Activated B cell treated with CpG ODN at 0.5 μM for 24 hours (primary cell): ENCODE measurements at regions of chr5 and their contacts with region 1.

Region 1: GRCh38 chr5:132293066-132293991 is 865 bp upstream of the SLC22A4 start:
- DNase-seq: peak; percentile 56
- ATAC-seq: peak; percentile 43
- H3K4me3 Mint-ChIP-seq: peak overlapping the region; percentile 87
- H3K27ac Mint-ChIP-seq: peak overlapping the region; percentile 76
- H3K4me1 Mint-ChIP-seq: peaks cover 15% of the 10 kb centered on the region
- H3K27me3 Mint-ChIP-seq: peaks cover 34% of the 10 kb centered on the region
- CTCF ChIP-seq: no peak

Region 2: GRCh38 chr5:132180134-132180745 is 113.1 kb before region 1 on chr5:
- CTCF ChIA-PET with region 1: no interaction called
- POLR2A ChIA-PET with region 1: no interaction called
- intact Hi-C with region 1: loop called (anchors 5 kb)
- DNase-seq: no peak
- ATAC-seq: peak; percentile 36
- H3K4me3 Mint-ChIP-seq: no peak overlapping the region
- H3K27ac Mint-ChIP-seq: no peak overlapping the region
- H3K4me1 Mint-ChIP-seq: peaks cover 24% of the 10 kb centered on the region
- H3K27me3 Mint-ChIP-seq: no peaks in the 10 kb centered on the region
- CTCF ChIP-seq: no peak

Region 3: GRCh38 chr5:132238169-132238744 is 55.1 kb before region 1 on chr5:
- CTCF ChIA-PET with region 1: no interaction called
- POLR2A ChIA-PET with region 1: no interaction called
- intact Hi-C with region 1: loop called (anchors 5 kb)
- DNase-seq: peak; percentile 59
- ATAC-seq: peak; percentile 90
- H3K4me3 Mint-ChIP-seq: no peak overlapping the region
- H3K27ac Mint-ChIP-seq: no peak overlapping the region
- H3K4me1 Mint-ChIP-seq: no peaks in the 10 kb centered on the region
- H3K27me3 Mint-ChIP-seq: peaks cover 4% of the 10 kb centered on the region
- CTCF ChIP-seq: no peak

Region 4: GRCh38 chr5:132272311-132273210 is 20.8 kb before region 1 on chr5:
- CTCF ChIA-PET with region 1: interaction called, 6 read pairs
- POLR2A ChIA-PET with region 1: interaction called, 3 read pairs
- intact Hi-C with region 1: loop called (anchors 1 kb)
- DNase-seq: peak; percentile 66
- ATAC-seq: peak; percentile 51
- H3K4me3 Mint-ChIP-seq: peak overlapping the region; percentile 4
- H3K27ac Mint-ChIP-seq: no peak overlapping the region
- H3K4me1 Mint-ChIP-seq: peaks cover 12% of the 10 kb centered on the region
- H3K27me3 Mint-ChIP-seq: peaks cover 11% of the 10 kb centered on the region
- CTCF ChIP-seq: peak; percentile 96

Region 5: GRCh38 chr5:132310141-132310834 is 17.0 kb after region 1 on chr5:
- CTCF ChIA-PET with region 1: no interaction called
- POLR2A ChIA-PET with region 1: interaction called, 10 read pairs
- intact Hi-C with region 1: no loop called
- DNase-seq: no peak
- ATAC-seq: no peak
- H3K4me3 Mint-ChIP-seq: no peak overlapping the region
- H3K27ac Mint-ChIP-seq: no peak overlapping the region
- H3K4me1 Mint-ChIP-seq: no peaks in the 10 kb centered on the region
- H3K27me3 Mint-ChIP-seq: no peaks in the 10 kb centered on the region
- CTCF ChIP-seq: no peak

Region 6: GRCh38 chr5:132354381-132355139 is 61.2 kb after region 1 on chr5:
- CTCF ChIA-PET with region 1: no interaction called
- POLR2A ChIA-PET with region 1: interaction called, 11 read pairs
- intact Hi-C with region 1: loop called (anchors 1 kb)
- DNase-seq: no peak
- ATAC-seq: no peak
- H3K4me3 Mint-ChIP-seq: peak overlapping the region; percentile 24
- H3K27ac Mint-ChIP-seq: peak overlapping the region; percentile 31
- H3K4me1 Mint-ChIP-seq: peaks cover 19% of the 10 kb centered on the region
- H3K27me3 Mint-ChIP-seq: no peaks in the 10 kb centered on the region
- CTCF ChIP-seq: no peak

Region 7: GRCh38 chr5:132369474-132370180 is 76.3 kb after region 1 on chr5 and contains the start of gene SLC22A5:
- CTCF ChIA-PET with region 1: interaction called, 8 read pairs
- POLR2A ChIA-PET with region 1: interaction called, 18 read pairs
- intact Hi-C with region 1: loop called (anchors 1 kb)
- DNase-seq: peak; percentile 84
- ATAC-seq: peak; percentile 95
- H3K4me3 Mint-ChIP-seq: peak within 1 kb of the TSS; percentile 86
- H3K27ac Mint-ChIP-seq: peak within 1 kb of the TSS; percentile 74
- H3K4me1 Mint-ChIP-seq: peaks cover 18% of the 10 kb centered on the region
- H3K27me3 Mint-ChIP-seq: no peaks in the 10 kb centered on the region
- CTCF ChIP-seq: no peak
- total RNA-seq, gene SLC22A5: 5.4 and 6.6 TPM in 2 replicates